ENCODE measurements at regions of chr12 and their contacts with region 1.

Region 1: DNA sequence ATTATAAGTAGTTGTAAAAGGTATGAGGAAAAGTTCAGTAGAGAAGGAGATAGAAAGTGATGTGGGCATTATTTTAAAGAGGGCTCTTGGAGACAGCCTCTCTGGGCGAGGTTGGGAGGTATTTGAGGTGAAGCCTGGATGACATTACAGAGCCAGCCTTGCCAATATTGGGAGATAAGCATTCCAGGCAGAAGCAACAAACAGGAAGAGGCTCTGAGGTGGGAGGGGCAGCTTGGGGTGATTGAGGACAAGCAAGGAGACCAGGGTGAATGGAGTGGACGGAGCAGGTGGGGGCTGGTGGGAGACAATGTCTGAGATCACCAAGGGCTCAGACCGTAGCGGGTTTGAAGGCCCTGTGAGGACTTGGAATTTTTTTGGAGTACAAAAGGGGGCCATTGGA is 87.3 kb downstream of the DYRK2 start:
- DNase-seq: no peak
- H3K4me3 ChIP-seq: no peak overlapping the region
- H3K27ac ChIP-seq: no peak overlapping the region
- H3K4me1 ChIP-seq: no peaks in the 10 kb centered on the region
- H3K27me3 ChIP-seq: no peaks in the 10 kb centered on the region
- CTCF ChIP-seq: no peak

Region 2: GRCh38 chr12:67797185-67797741 is 61.4 kb after region 1 on chr12:
- intact Hi-C with region 1: loop called (anchors 5 kb)
- DNase-seq: peak in 1 of 2 donors; percentile 65
- H3K4me3 ChIP-seq: no peak overlapping the region
- H3K27ac ChIP-seq: peak overlapping the region in 1 of 2 donors; percentile 4
- H3K4me1 ChIP-seq: peaks cover 0 to 13% of the 10 kb centered on the region in 2 donors
- H3K27me3 ChIP-seq: no peaks in the 10 kb centered on the region
- CTCF ChIP-seq: no peak

Region 3: DNA sequence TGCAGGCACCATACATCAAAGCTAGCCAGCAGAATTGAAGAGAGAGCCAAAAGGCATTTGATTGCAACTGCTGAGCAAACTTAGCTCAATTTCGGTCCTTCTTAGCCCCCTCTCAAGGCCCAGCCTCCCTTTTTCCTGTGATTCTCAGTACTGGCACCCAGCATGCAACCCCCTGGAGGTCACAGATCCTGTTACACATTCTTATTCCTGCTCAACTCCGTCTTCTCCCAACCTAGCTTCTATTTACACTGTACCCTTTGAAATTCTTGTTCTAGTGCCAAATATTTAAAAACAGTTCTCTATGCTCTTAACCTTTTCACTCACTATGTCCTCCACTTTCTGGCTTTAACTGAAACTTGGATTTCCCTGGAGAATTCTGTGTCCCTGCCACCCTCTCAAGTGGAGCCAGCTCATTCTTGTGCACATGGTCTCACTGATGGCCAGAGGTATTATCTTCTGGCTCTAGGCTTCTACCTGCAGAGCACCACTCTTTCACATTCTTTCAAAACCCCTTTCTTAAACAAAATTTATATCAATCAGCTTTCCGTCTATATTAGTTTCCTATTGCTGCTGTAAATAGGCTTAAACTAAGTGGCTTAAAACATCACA is 1372.3 kb after region 1 on chr12:
- intact Hi-C with region 1: no loop called
- DNase-seq: no peak
- H3K4me3 ChIP-seq: no peak overlapping the region
- H3K27ac ChIP-seq: no peak overlapping the region
- H3K4me1 ChIP-seq: no peaks in the 10 kb centered on the region
- H3K27me3 ChIP-seq: no peaks in the 10 kb centered on the region
- CTCF ChIP-seq: no peak